ENCODE measurements at regions of chr20 and their contacts with region 1.

Region 1: GRCh38 chr20:4973330-4974097 is 27.8 kb downstream of the SLC23A2 start:
- DNase-seq: no peak
- H3K4me3 ChIP-seq: no peak overlapping the region
- H3K27ac ChIP-seq: no peak overlapping the region
- H3K4me1 ChIP-seq: peaks cover 10% of the 10 kb centered on the region
- H3K27me3 ChIP-seq: no peaks in the 10 kb centered on the region
- CTCF ChIP-seq: no peak

Region 2: DNA sequence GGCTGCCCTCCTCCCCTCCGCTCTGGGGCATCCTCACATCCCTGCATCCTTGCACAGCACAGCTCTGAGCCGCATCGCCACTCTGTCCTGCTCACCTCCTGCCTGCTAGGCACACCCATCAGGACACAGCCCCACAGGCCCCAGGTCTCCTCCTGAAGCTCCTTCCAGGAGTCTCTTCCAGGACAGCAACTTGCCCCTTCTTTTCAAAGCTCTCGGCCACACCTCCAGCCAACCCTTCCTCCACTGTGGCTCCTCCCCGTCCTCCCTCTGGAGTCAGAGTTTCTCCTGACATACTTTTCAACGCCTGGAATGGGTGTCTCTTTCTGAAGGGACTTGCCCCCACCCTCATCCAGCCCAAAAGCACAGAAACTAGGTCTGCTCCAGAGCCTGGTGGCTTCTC is 49.5 kb before region 1 on chr20:
- CTCF ChIA-PET with region 1: no interaction called
- POLR2A ChIA-PET with region 1: interaction called, 15 read pairs
- intact Hi-C with region 1: no loop called
- DNase-seq: no peak
- H3K4me3 ChIP-seq: no peak overlapping the region
- H3K27ac ChIP-seq: no peak overlapping the region
- H3K4me1 ChIP-seq: peaks cover 9% of the 10 kb centered on the region
- H3K27me3 ChIP-seq: no peaks in the 10 kb centered on the region
- CTCF ChIP-seq: no peak

Region 3: DNA sequence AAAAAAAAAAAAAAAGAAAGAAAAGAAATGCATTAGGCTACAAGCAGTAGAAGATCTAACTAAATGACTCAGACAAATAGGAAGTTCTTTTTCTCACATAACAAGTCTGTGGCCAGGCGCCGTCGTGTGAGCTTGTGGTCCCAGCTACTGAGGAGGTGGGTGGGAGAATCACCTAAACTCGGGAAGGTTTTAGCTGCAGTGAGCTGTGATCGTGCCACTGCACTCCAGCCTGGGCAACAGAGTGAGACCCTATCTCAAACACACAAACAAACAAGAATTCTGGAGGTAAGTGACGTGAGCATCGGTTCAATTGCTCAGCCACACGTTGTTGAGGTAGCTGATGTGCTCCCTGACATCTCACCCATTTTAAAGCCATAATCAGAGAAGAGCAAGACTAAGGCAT is 65.7 kb after region 1 on chr20:
- CTCF ChIA-PET with region 1: no interaction called
- POLR2A ChIA-PET with region 1: no interaction called
- intact Hi-C with region 1: loop called (anchors 10 kb)
- DNase-seq: no peak
- H3K4me3 ChIP-seq: no peak overlapping the region
- H3K27ac ChIP-seq: no peak overlapping the region
- H3K4me1 ChIP-seq: no peaks in the 10 kb centered on the region
- H3K27me3 ChIP-seq: no peaks in the 10 kb centered on the region
- CTCF ChIP-seq: no peak